ENCODE measurements at regions of chr6 and their contacts with region 1.

Region 1: DNA sequence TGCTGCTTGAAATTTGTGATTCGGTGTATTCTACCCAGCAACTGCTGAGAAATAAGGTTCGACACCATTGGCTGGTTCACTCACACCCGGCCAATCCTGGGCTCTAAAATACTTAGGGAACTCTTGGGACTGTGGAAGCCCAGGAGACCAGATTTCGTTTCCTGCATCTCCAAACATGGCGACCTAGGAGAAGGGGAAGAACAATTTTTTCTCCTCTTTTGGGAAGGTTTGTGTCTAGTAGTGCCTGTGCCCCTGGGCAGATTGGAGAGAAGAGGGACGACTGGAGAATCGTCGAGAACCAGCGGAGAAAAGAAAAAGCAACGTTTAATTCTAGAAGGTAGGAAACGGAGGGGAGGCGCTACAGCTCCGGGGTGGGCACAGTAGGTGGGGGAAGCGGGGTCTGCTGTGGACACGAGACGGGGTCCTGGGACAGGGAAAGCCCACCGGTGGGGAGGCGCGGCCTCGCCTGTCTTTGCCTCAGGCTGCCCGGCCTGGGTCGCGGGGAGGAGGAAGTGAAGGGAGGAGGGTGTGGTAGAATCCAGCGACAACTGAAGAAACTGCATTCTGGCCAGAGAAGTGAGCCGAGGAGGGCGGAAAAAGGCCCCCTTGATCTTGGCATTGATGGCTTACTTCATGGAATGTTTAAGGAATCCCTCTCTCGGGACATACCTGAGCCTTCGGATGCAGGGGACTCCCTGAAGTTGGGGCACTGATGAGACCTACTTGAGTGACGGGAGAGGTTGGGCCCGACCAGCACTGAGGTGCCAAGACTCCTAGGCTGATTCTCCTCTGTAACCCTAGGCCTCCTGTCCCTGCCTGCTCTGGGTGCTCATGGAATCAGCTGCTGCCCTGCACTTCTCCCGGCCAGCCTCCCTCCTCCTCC is at the start of gene BTN2A1:
- DNase-seq: peak; percentile 63
- H3K4me3 Mint-ChIP-seq: peak within 1 kb of the TSS; percentile 97
- H3K27ac Mint-ChIP-seq: peak within 1 kb of the TSS; percentile 95
- H3K4me1 Mint-ChIP-seq: peaks cover 39% of the 10 kb centered on the region
- H3K27me3 Mint-ChIP-seq: no peaks in the 10 kb centered on the region
- total RNA-seq, gene BTN2A1: 20.2 and 23.0 TPM in 2 replicates

Region 2: GRCh38 chr6:26363882-26364701 is 94.0 kb before region 1 on chr6:
- intact Hi-C with region 1: loop called (anchors 5 kb)
- DNase-seq: no peak
- H3K4me3 Mint-ChIP-seq: no peak overlapping the region
- H3K27ac Mint-ChIP-seq: no peak overlapping the region
- H3K4me1 Mint-ChIP-seq: peaks cover 52% of the 10 kb centered on the region
- H3K27me3 Mint-ChIP-seq: no peaks in the 10 kb centered on the region

Region 3: GRCh38 chr6:26421259-26422144 is 36.5 kb before region 1 on chr6:
- intact Hi-C with region 1: loop called (anchors 5 kb)
- DNase-seq: peak; percentile 30
- H3K4me3 Mint-ChIP-seq: no peak overlapping the region
- H3K27ac Mint-ChIP-seq: no peak overlapping the region
- H3K4me1 Mint-ChIP-seq: peaks cover 13% of the 10 kb centered on the region
- H3K27me3 Mint-ChIP-seq: no peaks in the 10 kb centered on the region

Region 4: DNA sequence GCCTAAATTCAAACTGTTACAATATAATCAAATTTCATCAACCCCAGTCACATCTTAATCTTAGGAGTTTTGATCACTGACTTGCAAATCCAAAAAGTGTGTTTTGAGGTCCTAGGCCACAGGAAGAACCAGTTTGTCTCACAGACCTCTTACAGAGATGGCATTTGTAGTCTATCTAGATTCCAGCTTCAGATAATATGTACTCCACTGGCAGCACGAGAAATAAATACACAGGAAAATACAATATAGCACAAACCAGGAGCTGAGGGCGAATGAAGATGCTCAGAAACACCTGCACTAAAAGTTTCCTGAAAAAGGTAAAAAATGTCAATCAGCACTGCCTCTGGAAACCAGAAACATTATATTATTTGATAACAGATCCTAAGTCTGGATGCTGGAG is 18.4 kb before region 1 on chr6:
- intact Hi-C with region 1: loop called (anchors 1 kb)
- DNase-seq: no peak
- H3K4me3 Mint-ChIP-seq: peak overlapping the region; percentile 96
- H3K27ac Mint-ChIP-seq: peak overlapping the region; percentile 97
- H3K4me1 Mint-ChIP-seq: peaks cover 30% of the 10 kb centered on the region
- H3K27me3 Mint-ChIP-seq: no peaks in the 10 kb centered on the region

Region 5: GRCh38 chr6:26473758-26474438 is 15.9 kb after region 1 on chr6:
- intact Hi-C with region 1: loop called (anchors 1 kb)
- DNase-seq: peak; percentile 79
- H3K4me3 Mint-ChIP-seq: peak overlapping the region; percentile 100
- H3K27ac Mint-ChIP-seq: peak overlapping the region; percentile 100
- H3K4me1 Mint-ChIP-seq: peaks cover 29% of the 10 kb centered on the region
- H3K27me3 Mint-ChIP-seq: no peaks in the 10 kb centered on the region

Region 6: GRCh38 chr6:26532699-26533531 is 74.9 kb after region 1 on chr6:
- intact Hi-C with region 1: loop called (anchors 5 kb)
- DNase-seq: peak; percentile 86
- H3K4me3 Mint-ChIP-seq: peak overlapping the region; percentile 95
- H3K27ac Mint-ChIP-seq: peak overlapping the region; percentile 94
- H3K4me1 Mint-ChIP-seq: peaks cover 35% of the 10 kb centered on the region
- H3K27me3 Mint-ChIP-seq: no peaks in the 10 kb centered on the region